Mammary epithelial cell (primary cell): ENCODE measurements at regions of chr1 and their contacts with region 1.

Region 1: GRCh38 chr1:113452921-113453770 is 62.8 kb downstream of the MAGI3 start:
- DNase-seq: peak; percentile 22
- H3K4me3 ChIP-seq: no peak overlapping the region
- H3K27ac ChIP-seq: no peak overlapping the region
- H3K4me1 ChIP-seq: peaks cover 17% of the 10 kb centered on the region
- H3K27me3 ChIP-seq: no peaks in the 10 kb centered on the region
- CTCF ChIP-seq: peak; percentile 58 to 74

Region 2: DNA sequence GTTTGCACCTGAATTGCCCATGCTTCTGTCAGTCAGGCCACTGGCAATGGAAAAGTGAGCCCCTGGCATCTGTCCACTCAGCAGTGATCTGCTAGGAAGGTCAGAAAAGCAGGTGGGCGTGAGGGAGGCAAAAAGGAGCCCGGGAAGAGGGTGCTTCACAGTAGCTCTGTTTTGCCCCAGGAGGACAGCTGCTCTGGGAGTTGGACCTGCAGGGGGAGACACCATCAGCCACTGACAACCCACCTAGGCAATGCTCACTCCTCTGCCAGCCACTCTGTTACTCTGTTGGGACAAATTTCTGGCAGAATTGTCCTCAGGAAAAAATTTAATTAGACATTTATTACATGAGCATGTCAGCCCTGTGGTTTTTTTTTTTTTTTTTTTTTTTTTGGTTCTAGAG is 233.8 kb before region 1 on chr1:
- CTCF ChIA-PET with region 1: no interaction called
- dilution Hi-C with region 1: no loop called
- in situ Hi-C with region 1: no loop called
- intact Hi-C with region 1: loop called (anchors 2 kb)
- DNase-seq: no peak
- H3K4me3 ChIP-seq: no peak overlapping the region
- H3K27ac ChIP-seq: no peak overlapping the region
- H3K4me1 ChIP-seq: no peaks in the 10 kb centered on the region
- H3K27me3 ChIP-seq: peaks cover 1% of the 10 kb centered on the region
- CTCF ChIP-seq: peak; percentile 16 to 52

Region 3: DNA sequence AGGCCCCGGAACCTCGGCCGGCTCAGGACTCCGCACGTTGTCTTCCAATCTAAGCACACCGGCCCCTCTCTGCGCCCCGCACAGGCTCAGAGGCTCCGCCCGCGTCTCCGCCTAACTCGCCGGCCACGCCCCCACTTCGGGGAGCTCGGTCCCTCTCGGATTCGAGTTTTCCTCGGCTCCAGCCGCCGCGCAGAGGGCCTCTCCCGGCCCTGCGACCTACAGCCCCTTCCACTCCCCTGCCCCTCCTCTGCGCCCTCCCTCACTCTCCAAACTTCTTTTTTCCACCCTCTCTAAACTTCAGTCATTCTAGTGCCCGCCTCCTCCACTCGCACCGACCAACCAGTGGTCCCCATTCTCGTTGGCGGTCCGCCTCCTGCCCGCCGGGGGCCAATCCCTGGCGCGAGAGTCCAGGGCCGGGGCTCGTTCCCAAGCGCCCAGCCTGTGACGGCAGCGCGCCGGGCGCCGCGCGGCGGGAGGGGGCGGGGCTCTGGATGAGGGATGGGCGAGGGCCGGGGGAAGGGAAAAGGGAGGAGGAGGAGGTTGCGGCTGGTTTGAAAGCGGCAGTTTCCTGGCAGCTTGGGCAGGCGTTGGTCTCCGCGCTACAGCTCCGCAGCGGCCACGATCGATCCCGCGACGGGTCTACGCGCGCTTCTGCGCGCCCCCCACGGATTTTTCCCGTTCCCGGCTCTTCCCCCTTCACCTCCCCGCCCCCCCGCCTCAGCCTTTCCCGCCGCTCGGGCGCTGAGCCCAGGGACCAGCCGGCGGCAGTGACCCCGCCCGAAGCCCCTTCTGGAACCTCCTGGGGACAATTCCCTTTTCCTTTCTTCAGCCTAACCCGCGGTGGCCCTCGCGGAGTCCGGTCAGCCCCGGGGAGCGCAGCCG is 63.0 kb before region 1 on chr1 and contains the start of gene MAGI3:
- CTCF ChIA-PET with region 1: interaction called, 6 read pairs
- dilution Hi-C with region 1: no loop called
- in situ Hi-C with region 1: no loop called
- intact Hi-C with region 1: loop called (anchors 1 kb)
- DNase-seq: peak; percentile 99
- H3K4me3 ChIP-seq: peak within 1 kb of the TSS; percentile 68 to 97 (median 74)
- H3K27ac ChIP-seq: peak within 1 kb of the TSS; percentile 71
- H3K4me1 ChIP-seq: peaks cover 14% of the 10 kb centered on the region
- H3K27me3 ChIP-seq: no peaks in the 10 kb centered on the region
- CTCF ChIP-seq: no peak
- total RNA-seq, gene MAGI3: 8.5 to 10.3 TPM